Activated CD4-positive, alpha-beta memory T cell treated with anti-CD3 and anti-CD28 coated beads, Interleukin-2, amount 10 ng/mL, durations not matched to agents 7 days and 5 days (primary cell): ENCODE measurements at regions of chr10 and their contacts with region 1.

Region 1: DNA sequence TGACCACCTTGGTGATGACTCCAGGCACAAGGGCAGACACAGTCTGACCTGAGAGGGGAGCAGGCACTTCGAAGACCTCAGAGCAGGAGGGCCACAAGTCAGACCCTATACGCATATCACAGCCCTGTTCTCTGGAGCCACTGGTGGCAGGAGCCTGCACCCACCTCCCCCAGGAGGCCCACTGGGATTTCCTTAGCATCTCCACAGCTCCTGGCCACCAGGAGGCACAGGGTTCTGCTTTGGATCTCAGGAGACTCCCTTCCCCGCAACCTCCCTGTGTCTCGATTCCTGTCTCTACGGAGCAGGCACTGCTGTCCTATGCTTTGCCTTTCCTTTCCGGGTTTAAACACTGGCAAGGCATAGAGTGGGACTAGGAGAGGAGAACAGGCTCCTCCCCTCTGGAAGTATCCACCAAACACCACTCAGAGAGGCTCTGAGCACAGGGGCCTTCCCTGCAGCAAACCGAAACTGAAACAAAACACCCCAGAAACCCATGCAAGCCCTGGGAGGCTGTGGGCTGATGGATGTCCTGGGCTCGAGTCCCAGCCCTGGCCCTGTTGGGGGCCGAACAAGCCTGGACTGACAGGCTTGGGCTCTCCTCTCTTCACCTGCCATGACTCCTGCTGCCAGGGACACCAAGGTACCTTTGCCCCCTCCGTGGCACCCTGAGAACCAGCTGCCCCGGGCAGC is 166.3 kb downstream of the NEURL1 start:
- DNase-seq: peak; percentile 72
- H3K4me3 Mint-ChIP-seq: peak overlapping the region; percentile 82
- H3K27ac Mint-ChIP-seq: peak overlapping the region; percentile 74
- H3K4me1 Mint-ChIP-seq: peaks cover 26% of the 10 kb centered on the region
- H3K27me3 Mint-ChIP-seq: no peaks in the 10 kb centered on the region

Region 2: GRCh38 chr10:103678178-103678526 is 18.3 kb after region 1 on chr10:
- CTCF ChIA-PET with region 1: interaction called, 3 read pairs
- POLR2A ChIA-PET with region 1: interaction called, 15 read pairs
- DNase-seq: peak; percentile 89
- H3K4me3 Mint-ChIP-seq: peak overlapping the region; percentile 75
- H3K27ac Mint-ChIP-seq: peak overlapping the region; percentile 83
- H3K4me1 Mint-ChIP-seq: peaks cover 16% of the 10 kb centered on the region
- H3K27me3 Mint-ChIP-seq: no peaks in the 10 kb centered on the region